Esophagus muscularis mucosa (tissue), 4 donors: ENCODE measurements at regions of chr12 and their contacts with region 1.

Region 1: GRCh38 chr12:7678738-7679137 is 13.0 kb upstream of the APOBEC1 start:
- DNase-seq: no peak
- H3K4me3 ChIP-seq: no peak overlapping the region
- H3K27ac ChIP-seq: no peak overlapping the region
- H3K4me1 ChIP-seq: no peaks in the 10 kb centered on the region
- H3K27me3 ChIP-seq: peaks cover 0 to 4% (median 0%) of the 10 kb centered on the region in 4 donors
- CTCF ChIP-seq: no peak
- EP300 ChIP-seq: no peak
- POLR2A ChIP-seq: no peak

Region 2: DNA sequence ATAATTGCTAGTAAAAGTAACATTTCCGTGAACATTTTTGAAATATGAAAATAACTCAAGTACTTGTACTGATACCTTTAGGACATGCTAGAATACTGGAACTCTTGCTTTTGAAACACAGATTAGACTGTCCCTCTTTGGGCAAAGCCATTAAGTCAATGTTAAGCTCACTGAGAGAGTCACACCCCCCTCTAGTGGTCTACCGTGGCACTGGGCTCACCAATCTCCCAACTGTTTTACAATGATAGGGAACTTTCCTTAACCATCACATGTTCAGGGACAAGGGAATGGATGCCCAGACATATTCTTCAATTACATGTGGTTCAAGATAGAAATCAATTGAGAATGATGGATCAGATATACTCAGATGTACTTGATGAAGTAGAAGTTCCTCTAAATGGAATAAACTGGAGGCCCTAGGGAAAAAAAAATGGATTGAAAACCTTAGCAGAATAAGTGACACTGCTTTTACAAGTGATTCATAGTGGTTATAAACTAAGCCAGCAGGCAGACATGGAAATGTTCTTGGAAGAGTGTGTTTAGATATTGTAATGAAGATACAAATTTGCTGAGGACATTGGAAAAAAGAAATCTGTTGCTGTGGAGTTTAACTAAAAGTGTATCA is 128.2 kb after region 1 on chr12:
- intact Hi-C with region 1: loop called (anchors 10 kb)
- DNase-seq: no peak
- H3K4me3 ChIP-seq: no peak overlapping the region
- H3K27ac ChIP-seq: no peak overlapping the region
- H3K4me1 ChIP-seq: peaks cover 0 to 4% (median 0%) of the 10 kb centered on the region in 4 donors
- H3K27me3 ChIP-seq: no peaks in the 10 kb centered on the region
- CTCF ChIP-seq: peak; percentile 67 to 84 (median 71)
- EP300 ChIP-seq: no peak
- POLR2A ChIP-seq: no peak